G401 (cell line): ENCODE measurements at regions of chr1 and their contacts with region 1.

Region 1: GRCh38 chr1:155816351-155816750 is 40.7 kb downstream of the GON4L start:
- DNase-seq: no peak

Region 2: DNA sequence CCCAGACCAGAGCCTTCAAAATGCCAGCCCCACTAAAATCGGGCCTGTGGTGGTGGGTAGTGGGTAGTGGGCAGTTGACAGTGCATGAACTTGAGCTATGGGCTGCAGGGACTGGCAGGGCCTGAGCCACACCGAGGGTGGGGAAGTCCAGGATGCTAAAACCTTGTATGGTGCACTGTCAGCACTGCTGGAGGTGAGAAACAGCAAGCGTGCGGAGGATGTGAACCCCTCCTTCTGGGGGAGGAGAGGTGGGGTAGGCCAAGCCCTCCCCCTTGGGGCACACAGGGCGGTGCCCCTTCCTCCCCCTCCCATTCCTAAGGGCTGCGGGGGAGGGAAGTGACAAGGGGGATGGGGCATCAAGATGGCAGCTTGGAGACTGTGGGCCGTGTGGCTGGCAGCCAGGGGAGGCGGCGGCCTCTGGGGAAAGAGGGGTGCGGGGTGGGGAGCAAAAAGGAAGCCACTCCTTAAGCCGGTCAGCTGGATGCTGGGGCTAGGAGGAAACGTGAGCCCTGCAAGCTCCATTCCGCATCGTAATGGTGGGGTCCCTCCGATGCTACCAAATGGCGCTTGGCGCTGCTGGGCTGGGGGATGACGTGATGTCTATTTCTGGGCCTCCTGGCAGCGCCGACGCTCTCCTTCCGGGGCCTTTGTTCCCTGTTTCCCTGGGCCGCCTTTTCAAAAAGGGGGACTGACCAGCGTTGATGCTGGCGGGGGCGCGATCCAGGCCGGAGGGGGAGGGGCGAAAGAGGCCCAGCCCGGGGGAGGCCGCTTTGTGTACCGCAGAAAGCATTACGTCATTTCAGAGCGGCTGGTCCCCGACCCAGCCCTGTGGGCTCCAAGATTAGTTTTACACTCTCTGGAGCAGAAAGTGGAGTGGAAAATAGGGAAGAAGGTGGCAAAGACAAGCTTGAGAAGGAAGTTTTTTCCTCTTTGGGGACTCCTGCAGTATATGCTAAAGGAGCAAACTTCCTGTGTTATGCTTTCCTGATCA is 43.8 kb after region 1 on chr1:
- in situ Hi-C with region 1: loop called (anchors 5 kb)
- DNase-seq: peak; percentile 84

Region 3: GRCh38 chr1:157472056-157472698 is 1655.8 kb after region 1 on chr1:
- in situ Hi-C with region 1: no loop called
- DNase-seq: no peak